ENCODE measurements at regions of chr5 and their contacts with region 1.

Region 1: DNA sequence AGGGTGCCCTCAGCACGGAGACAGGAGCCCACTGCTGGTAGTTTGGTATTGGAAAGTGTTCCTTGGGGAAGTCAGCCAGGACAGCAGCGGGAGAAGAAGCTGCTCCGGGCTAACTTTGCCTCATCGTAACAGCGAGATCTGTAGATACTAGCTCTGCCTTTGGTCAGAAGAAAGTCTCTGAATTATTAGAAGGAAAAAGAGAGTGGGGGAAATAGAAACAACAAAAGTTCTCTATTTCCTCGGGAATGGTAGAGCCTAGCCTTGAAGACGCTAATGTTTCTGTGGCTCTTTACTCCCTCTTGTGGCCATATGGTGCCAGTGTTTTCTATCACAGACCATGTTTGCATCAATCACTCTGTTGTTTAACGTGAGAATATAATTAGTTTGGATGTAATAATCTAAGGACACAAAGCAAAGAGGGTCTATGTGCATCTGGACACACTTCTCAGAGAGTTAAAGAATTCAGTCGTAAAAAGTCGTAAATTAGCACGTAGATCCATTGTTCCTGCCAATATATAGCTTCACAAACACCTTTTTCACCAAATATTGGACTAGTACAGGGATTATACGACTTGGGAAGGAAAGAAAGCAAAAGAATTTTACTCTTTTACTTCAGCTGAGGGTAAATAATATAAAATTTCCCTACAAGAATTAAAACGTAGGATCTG is 40.2 kb upstream of the HSD17B4 start:
- DNase-seq: peak; percentile 93
- H3K4me3 Mint-ChIP-seq: peak overlapping the region; percentile 72
- H3K27ac Mint-ChIP-seq: peak overlapping the region; percentile 77
- H3K4me1 Mint-ChIP-seq: peaks cover 14% of the 10 kb centered on the region
- H3K27me3 Mint-ChIP-seq: no peaks in the 10 kb centered on the region
- CTCF ChIP-seq: peak; percentile 96

Region 2: DNA sequence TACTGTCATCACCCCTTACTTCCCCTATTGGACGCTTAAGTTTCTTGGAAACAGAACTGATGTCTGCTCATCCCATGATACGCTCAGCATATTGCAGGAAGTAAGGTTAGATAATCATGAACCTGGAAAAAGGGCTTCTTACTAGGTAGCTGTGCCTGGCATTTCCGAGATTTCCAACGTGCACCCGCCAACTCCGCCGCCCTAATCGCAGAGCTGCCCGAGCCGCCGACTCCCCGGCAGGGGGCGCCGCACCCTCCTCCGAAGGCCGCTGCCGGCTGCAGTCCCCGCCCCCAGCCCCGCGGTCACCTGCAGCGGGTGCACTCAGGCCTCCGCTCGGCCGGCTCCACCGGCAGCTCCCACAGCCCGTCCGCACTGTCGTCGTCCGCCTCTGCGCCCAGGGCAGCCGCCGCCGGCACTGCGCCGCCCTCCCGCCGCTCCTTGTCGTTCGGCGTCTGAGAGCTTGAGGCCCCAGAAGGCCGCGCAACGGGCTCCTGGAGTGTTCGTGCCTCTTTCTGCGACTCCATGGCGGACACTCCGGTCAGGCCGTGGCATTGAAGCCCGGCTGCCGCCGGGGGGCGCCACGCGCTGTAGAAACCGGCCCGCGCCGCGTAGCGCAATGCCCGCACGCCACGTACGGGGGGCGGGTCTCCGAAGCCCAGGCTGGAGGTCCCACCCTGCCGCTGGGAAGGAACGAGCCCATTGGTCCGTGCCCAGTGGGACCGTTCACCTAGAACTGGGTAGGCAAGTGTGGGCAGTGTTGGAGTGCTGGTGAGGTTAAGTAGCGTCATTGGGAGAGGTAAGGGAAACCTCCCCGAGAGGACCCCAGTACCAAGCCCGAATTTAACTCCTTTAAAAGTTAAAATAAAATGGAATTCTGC is 423.8 kb before region 1 on chr5 and contains the start of gene DTWD2:
- CTCF ChIA-PET with region 1: interaction called, 49 read pairs
- POLR2A ChIA-PET with region 1: interaction called, 12 read pairs
- intact Hi-C with region 1: loop called (anchors 1 kb)
- DNase-seq: peak; percentile 96
- H3K4me3 Mint-ChIP-seq: peak within 1 kb of the TSS; percentile 82
- H3K27ac Mint-ChIP-seq: peak within 1 kb of the TSS; percentile 73
- H3K4me1 Mint-ChIP-seq: peaks cover 34% of the 10 kb centered on the region
- H3K27me3 Mint-ChIP-seq: no peaks in the 10 kb centered on the region
- CTCF ChIP-seq: peak; percentile 86
- total RNA-seq, gene DTWD2: 10.1 and 10.5 TPM in 2 replicates

Region 3: GRCh38 chr5:119131530-119132313 is 280.3 kb before region 1 on chr5:
- CTCF ChIA-PET with region 1: interaction called, 11 read pairs
- POLR2A ChIA-PET with region 1: no interaction called
- intact Hi-C with region 1: no loop called
- DNase-seq: no peak
- H3K4me3 Mint-ChIP-seq: no peak overlapping the region
- H3K27ac Mint-ChIP-seq: no peak overlapping the region
- H3K4me1 Mint-ChIP-seq: no peaks in the 10 kb centered on the region
- H3K27me3 Mint-ChIP-seq: no peaks in the 10 kb centered on the region
- CTCF ChIP-seq: no peak

Region 4: DNA sequence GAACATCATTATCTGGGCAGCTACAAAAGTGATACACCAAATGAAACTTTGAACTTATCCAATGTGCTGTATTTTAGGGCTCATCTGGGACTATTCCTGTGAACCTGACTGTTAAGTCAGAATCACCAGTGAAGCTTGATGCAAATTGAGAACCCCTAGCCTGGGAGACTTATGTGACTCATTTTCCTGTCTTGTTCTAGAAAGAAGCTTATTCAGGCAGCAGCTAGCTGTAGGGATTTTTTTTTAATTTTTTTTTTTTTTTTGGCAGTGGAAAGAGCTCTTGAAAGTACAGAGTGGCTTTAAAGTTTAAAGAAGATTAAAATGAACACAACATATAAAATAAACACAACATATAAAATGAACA is 137.3 kb before region 1 on chr5:
- CTCF ChIA-PET with region 1: interaction called, 16 read pairs
- POLR2A ChIA-PET with region 1: interaction called, 15 read pairs
- intact Hi-C with region 1: no loop called
- DNase-seq: peak; percentile 80
- H3K4me3 Mint-ChIP-seq: no peak overlapping the region
- H3K27ac Mint-ChIP-seq: peak overlapping the region; percentile 80
- H3K4me1 Mint-ChIP-seq: peaks cover 35% of the 10 kb centered on the region
- H3K27me3 Mint-ChIP-seq: no peaks in the 10 kb centered on the region
- CTCF ChIP-seq: no peak

Region 5: GRCh38 chr5:119315516-119315949 is 96.5 kb before region 1 on chr5:
- CTCF ChIA-PET with region 1: interaction called, 93 read pairs
- POLR2A ChIA-PET with region 1: interaction called, 12 read pairs
- intact Hi-C with region 1: loop called (anchors 1 kb)
- DNase-seq: peak; percentile 82
- H3K4me3 Mint-ChIP-seq: no peak overlapping the region
- H3K27ac Mint-ChIP-seq: no peak overlapping the region
- H3K4me1 Mint-ChIP-seq: no peaks in the 10 kb centered on the region
- H3K27me3 Mint-ChIP-seq: no peaks in the 10 kb centered on the region
- CTCF ChIP-seq: peak; percentile 39

Region 6: GRCh38 chr5:119340597-119341218 is 71.4 kb before region 1 on chr5:
- CTCF ChIA-PET with region 1: interaction called, 253 read pairs
- POLR2A ChIA-PET with region 1: interaction called, 72 read pairs
- intact Hi-C with region 1: loop called (anchors 1 kb)
- DNase-seq: no peak
- H3K4me3 Mint-ChIP-seq: no peak overlapping the region
- H3K27ac Mint-ChIP-seq: no peak overlapping the region
- H3K4me1 Mint-ChIP-seq: peaks cover 24% of the 10 kb centered on the region
- H3K27me3 Mint-ChIP-seq: no peaks in the 10 kb centered on the region
- CTCF ChIP-seq: no peak

Region 7: DNA sequence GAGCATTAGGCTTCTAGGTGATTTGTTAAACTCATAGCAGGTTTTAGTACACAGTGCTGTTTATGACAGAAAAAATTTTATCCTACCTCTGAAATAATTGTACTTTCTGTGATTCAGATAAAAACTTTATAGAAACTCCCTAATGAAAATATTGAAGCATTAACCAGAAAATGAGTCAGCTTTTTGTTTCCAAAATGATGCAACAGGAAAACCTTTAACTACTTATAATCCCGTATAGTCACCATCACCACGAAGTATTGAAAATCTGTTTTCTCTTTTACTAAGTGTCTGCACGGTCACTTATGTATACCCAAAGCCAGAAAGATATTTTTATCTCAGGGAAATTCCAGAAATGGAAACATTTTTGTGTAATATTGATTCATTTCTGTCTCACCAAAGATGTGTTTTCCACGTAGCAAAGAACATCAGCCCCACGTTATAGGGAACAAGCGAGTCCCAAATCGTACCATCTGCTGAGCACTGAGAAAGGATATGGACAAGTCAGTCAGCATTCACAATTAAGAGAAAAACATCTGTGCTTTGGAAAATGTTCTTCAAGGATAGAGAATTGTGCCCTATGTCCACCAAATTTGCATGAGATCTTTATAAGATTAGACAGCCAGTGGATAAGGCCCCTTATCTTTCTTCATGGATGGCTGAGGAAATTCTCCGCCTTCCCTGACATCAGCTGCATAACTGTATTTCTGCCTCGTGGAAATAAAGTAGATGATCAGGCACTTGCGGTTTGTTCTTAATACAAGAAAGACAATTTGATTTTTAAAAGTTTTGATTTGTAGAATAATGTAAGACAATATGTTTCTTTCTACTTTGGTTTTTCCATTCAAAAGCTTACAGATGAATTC is 14.3 kb before region 1 on chr5:
- CTCF ChIA-PET with region 1: interaction called, 71 read pairs
- POLR2A ChIA-PET with region 1: interaction called, 57 read pairs
- intact Hi-C with region 1: no loop called
- DNase-seq: peak; percentile 87
- H3K4me3 Mint-ChIP-seq: peak overlapping the region; percentile 63
- H3K27ac Mint-ChIP-seq: peak overlapping the region; percentile 94
- H3K4me1 Mint-ChIP-seq: peaks cover 48% of the 10 kb centered on the region
- H3K27me3 Mint-ChIP-seq: no peaks in the 10 kb centered on the region
- CTCF ChIP-seq: no peak